GM12878 (cell line): ENCODE measurements at regions of chr6 and their contacts with region 1.

Region 1: DNA sequence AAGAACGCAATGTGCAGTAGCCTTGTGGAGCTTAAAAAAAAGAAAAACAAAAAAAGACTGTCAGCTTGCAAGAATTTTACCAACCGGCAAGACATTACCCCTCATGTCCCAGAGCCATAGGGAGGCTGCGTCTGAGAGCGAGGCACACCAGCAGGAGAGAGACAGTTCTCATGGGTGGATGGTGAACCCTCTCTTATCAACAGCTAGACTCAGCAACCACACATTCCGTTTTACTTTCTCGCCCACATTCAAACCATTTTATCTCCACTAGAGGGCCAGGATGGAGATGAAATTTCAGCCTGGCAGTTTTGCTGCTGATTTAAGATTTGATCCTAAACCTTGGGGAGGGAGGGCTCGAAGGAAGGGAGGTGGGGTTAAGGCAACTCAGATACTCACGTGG is 247.0 kb downstream of the ATXN1 start:
- DNase-seq: no peak
- ATAC-seq: peak; percentile 50
- H3K4me3 ChIP-seq: no peak overlapping the region
- H3K27ac ChIP-seq: no peak overlapping the region
- H3K4me1 ChIP-seq: peaks cover 45% of the 10 kb centered on the region
- H3K27me3 ChIP-seq: no peaks in the 10 kb centered on the region
- CTCF ChIP-seq: peak; percentile 49 to 62 (median 60)
- EP300 ChIP-seq: no peak
- POLR2A ChIP-seq: no peak
- RAD21 ChIP-seq: peak; percentile 78

Region 2: DNA sequence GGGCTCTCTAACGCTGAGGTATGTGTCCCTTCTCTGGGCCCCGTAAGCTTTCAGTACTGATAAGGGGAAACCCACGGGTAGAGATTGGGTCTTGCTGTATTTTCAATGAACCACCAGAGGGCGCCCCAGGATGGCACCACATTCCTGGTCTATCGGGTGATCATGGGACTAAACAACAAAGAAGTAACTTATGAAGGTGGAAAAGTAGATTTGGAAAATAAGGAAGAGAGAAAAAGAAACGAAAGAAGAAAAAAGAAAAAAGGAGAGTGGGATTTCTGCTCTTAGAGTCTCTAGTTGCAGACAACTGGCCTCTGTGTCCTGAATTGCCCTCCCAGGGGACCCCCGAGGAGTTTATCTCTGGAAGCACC is 182.1 kb before region 1 on chr6:
- CTCF ChIA-PET with region 1: interaction called, 51 read pairs
- POLR2A ChIA-PET with region 1: no interaction called
- RAD21 ChIA-PET with region 1: interaction called, 24 read pairs
- SMC1A ChIA-PET with region 1: interaction called, 14 read pairs
- in situ Hi-C with region 1: loop called (anchors 10 kb)
- intact Hi-C with region 1: loop called (anchors 2 kb)
- DNase-seq: peak; percentile 78
- ATAC-seq: peak; percentile 99
- H3K4me3 ChIP-seq: no peak overlapping the region
- H3K27ac ChIP-seq: peak overlapping the region; percentile 13; the same call in 1 of the 2 replicates
- H3K4me1 ChIP-seq: peaks cover 19% of the 10 kb centered on the region
- H3K27me3 ChIP-seq: no peaks in the 10 kb centered on the region
- CTCF ChIP-seq: peak; percentile 77 to 95 (median 94); a peak in 5 of 6 replicates
- EP300 ChIP-seq: no peak
- POLR2A ChIP-seq: no peak
- RAD21 ChIP-seq: peak; percentile 99

Region 3: GRCh38 chr6:16438718-16439591 is 75.3 kb before region 1 on chr6:
- CTCF ChIA-PET with region 1: interaction called, 23 read pairs
- POLR2A ChIA-PET with region 1: no interaction called
- RAD21 ChIA-PET with region 1: interaction called, 11 read pairs
- SMC1A ChIA-PET with region 1: interaction called, 9 read pairs
- in situ Hi-C with region 1: no loop called
- intact Hi-C with region 1: no loop called
- DNase-seq: peak; percentile 53
- ATAC-seq: peak; percentile 78
- H3K4me3 ChIP-seq: no peak overlapping the region
- H3K27ac ChIP-seq: peak overlapping the region; percentile 70
- H3K4me1 ChIP-seq: peaks cover 41% of the 10 kb centered on the region
- H3K27me3 ChIP-seq: no peaks in the 10 kb centered on the region
- CTCF ChIP-seq: no peak
- EP300 ChIP-seq: no peak
- POLR2A ChIP-seq: no peak
- RAD21 ChIP-seq: no peak

Region 4: GRCh38 chr6:16494793-16495192 is 19.5 kb before region 1 on chr6:
- CTCF ChIA-PET with region 1: interaction called, 203 read pairs
- POLR2A ChIA-PET with region 1: interaction called, 7 read pairs
- RAD21 ChIA-PET with region 1: interaction called, 58 read pairs
- SMC1A ChIA-PET with region 1: interaction called, 135 read pairs
- in situ Hi-C with region 1: no loop called
- intact Hi-C with region 1: no loop called
- DNase-seq: peak; percentile 90
- ATAC-seq: peak; percentile 75
- H3K4me3 ChIP-seq: peak overlapping the region; percentile 3; the same call in 1 of the 2 replicates
- H3K27ac ChIP-seq: peak overlapping the region; percentile 85
- H3K4me1 ChIP-seq: peaks cover 60% of the 10 kb centered on the region
- H3K27me3 ChIP-seq: no peaks in the 10 kb centered on the region
- CTCF ChIP-seq: no peak
- EP300 ChIP-seq: peak in 1 of 2 experiments; percentile 87; a peak in 3 of 4 replicates
- POLR2A ChIP-seq: no peak
- RAD21 ChIP-seq: no peak

Region 5: DNA sequence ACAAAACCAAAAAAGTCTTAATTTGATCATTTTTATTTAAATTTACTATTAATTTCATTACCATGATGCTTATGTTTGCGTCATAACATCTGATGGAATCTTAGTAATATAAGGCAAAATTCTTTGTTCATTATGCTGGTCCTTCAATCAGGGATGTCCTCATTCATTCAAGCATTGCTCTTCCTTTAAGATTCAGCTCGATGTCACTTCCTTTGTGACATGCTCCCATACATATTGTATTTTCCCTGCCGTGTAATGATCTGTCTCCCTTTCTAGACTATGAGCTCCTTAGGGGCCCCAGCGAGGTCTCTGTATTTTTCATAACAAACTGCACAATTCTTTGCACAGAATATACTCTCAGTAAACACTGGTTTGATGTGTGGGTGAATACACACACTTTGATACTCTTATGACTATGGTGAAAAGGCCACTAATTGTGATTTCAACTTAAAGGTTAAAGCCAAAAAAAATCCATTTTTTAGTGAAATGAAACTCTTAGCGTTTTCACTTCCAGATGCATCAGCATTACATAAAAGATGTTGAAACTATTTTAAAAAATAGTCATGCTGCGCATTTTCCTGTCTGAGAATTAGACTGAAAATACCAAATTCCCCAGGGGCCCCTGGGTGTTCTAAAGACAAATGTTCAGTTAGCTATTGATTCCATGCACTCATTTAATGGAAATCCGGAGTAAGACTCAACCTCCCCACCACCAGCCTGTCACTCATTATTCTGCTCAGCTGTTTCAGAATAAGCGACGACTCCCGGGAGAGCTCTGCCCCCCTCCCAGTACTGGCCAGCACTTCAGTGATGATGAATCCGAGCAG is 77.4 kb after region 1 on chr6:
- CTCF ChIA-PET with region 1: interaction called, 8 read pairs
- POLR2A ChIA-PET with region 1: no interaction called
- RAD21 ChIA-PET with region 1: interaction called, 31 read pairs
- SMC1A ChIA-PET with region 1: interaction called, 98 read pairs
- in situ Hi-C with region 1: no loop called
- intact Hi-C with region 1: no loop called
- DNase-seq: peak; percentile 85
- ATAC-seq: peak; percentile 90
- H3K4me3 ChIP-seq: peak overlapping the region; percentile 43; the same call in 1 of the 2 replicates
- H3K27ac ChIP-seq: peak overlapping the region; percentile 89
- H3K4me1 ChIP-seq: peaks cover 31% of the 10 kb centered on the region
- H3K27me3 ChIP-seq: no peaks in the 10 kb centered on the region
- CTCF ChIP-seq: no peak
- EP300 ChIP-seq: peak; percentile 90 to 96; a peak in 3 of 4 replicates
- POLR2A ChIP-seq: no peak
- RAD21 ChIP-seq: no peak; the same call in 1 of the 2 replicates

Region 6: DNA sequence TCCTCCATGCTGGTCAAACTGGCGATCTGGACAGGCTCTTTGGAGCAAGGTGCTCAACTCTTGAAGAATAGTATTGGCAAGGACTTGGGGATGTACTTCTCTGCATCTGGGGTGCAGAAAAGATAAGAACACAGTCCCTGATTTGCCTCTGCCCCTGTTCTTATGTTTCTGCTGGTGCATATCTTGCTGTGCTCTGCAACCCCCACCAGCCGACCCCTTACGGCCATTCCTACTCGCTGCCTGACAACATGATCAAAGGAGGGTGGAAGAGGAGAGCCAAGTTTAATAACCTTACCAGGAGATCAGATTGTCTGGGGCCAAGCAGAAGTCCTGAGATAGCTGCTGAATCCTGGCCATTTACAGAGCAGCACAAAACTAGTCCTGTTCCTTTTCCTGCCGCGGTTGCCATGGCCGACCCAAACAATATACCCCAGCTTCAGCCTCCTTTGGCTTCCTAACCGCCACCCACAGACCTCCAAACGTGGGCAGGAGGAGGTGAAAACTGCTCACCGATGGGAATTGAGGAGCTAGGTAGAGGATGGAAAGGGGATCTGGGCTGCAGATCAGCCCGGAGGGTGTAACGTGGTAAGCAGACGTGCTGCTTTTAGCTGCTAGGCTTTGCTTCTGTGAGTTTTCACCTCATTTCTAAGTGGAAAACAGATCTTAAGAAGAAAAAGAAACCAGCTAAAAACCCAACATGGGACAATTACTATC is 186.1 kb after region 1 on chr6:
- CTCF ChIA-PET with region 1: interaction called, 15 read pairs
- POLR2A ChIA-PET with region 1: no interaction called
- RAD21 ChIA-PET with region 1: interaction called, 4 read pairs
- SMC1A ChIA-PET with region 1: interaction called, 9 read pairs
- in situ Hi-C with region 1: no loop called
- intact Hi-C with region 1: no loop called
- DNase-seq: no peak
- ATAC-seq: peak; percentile 58
- H3K4me3 ChIP-seq: no peak overlapping the region
- H3K27ac ChIP-seq: no peak overlapping the region
- H3K4me1 ChIP-seq: peaks cover 12% of the 10 kb centered on the region
- H3K27me3 ChIP-seq: no peaks in the 10 kb centered on the region
- CTCF ChIP-seq: no peak
- EP300 ChIP-seq: no peak
- POLR2A ChIP-seq: no peak
- RAD21 ChIP-seq: no peak

Region 7: DNA sequence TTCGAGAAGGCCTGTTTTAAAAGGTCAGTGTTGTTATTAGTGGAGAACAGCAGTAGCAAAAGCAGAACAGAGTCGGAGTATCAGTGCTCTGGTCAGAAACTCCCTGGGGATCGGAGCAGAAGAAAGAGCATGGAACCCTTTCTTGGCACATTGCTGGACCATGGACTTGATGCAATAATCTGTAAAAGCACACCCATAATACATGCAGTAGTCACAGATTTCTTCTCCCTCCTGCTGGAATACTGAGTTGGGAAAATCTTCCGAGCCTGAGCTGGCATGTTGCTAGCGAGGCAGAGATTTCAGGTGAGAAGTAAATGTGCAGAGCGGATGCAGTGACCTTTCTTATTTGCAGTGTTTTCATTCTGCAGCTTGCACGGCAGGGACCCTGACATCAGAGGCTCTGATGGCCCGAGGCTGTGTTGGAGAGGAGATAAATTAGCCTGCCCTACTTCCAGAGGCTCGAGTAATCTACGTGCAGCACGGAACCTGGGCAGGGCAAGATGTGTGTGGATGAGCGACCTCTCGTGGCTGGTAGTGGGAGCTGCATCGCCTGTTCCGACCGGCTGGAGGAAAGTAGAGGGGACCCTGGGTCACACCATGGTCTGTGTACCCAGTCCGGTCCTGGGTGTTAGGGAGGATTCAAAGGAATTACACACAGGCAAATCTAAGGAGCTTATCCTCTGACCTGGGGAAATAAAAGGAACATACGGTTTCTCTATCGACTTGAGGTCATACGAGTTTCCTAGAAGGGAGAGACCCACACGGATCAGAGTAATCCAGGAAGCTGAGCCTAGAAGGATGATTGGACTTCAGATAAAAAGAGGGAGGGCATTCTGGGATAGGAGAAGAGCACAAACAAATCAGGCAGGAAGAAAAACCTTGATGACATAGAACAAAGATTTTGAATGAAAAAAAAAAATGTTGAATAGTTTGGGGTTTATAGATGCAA is 450.6 kb after region 1 on chr6:
- CTCF ChIA-PET with region 1: no interaction called
- POLR2A ChIA-PET with region 1: no interaction called
- RAD21 ChIA-PET with region 1: interaction called, 3 read pairs
- SMC1A ChIA-PET with region 1: no interaction called
- in situ Hi-C with region 1: loop called (anchors 10 kb)
- intact Hi-C with region 1: no loop called
- DNase-seq: peak; percentile 12
- ATAC-seq: peak; percentile 99
- H3K4me3 ChIP-seq: no peak overlapping the region
- H3K27ac ChIP-seq: no peak overlapping the region
- H3K4me1 ChIP-seq: no peaks in the 10 kb centered on the region
- H3K27me3 ChIP-seq: no peaks in the 10 kb centered on the region; a peak in 1 of 4 replicates
- CTCF ChIP-seq: peak; percentile 81 to 95 (median 92)
- EP300 ChIP-seq: no peak
- POLR2A ChIP-seq: no peak
- RAD21 ChIP-seq: peak; percentile 85